GM18951 (cell line): ENCODE measurements at regions of chr15 and their contacts with region 1.

Region 1: GRCh38 chr15:31215490-31216214 is 111.0 kb upstream of the KLF13 start:
- POLR2A ChIP-seq: peak; percentile 64

Region 2: GRCh38 chr15:31435261-31435911 is 219.7 kb after region 1 on chr15:
- in situ Hi-C with region 1: loop called (anchors 25 kb)
- POLR2A ChIP-seq: peak; percentile 49